ENCODE measurements at regions of chr2 and their contacts with region 1.

Region 1: DNA sequence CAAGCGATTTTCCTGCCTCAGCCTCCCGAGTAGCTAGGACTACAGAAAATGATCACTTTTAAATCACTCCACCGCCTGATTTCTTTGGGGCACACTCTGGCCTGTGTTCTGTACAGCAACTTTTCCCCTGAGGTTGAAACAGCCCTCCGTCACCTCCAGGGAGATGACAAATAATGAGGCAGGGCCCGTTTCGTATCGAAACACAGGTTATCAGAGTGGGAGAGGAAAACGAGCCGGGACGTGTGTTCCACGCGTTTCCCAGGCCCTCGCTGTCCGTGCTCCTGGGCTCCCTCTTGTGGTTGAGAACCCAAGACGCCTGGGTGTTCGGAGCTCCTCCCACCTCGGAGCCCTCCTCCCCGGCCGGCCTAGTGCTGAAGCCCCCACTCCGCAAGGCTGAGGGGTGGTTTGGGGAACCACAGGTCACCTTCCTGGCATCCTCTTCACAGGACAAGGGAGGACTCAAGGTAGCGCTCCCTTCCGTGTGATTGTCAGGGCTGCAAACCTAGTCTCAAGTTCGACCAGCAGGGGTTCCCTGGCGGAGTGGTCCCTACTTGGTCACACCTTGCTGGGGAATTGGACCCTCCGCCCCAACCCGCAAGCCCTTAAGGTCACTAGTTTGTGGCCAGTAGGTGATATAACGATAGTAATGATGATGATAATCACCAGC is 12.8 kb downstream of the ATP6V1B1 start:
- DNase-seq: peak; percentile 74 to 85 (median 76)
- ATAC-seq: peak; percentile 58 to 98 (median 94)
- H3K4me3 ChIP-seq: peak overlapping the region in 9 of 12 donors; percentile 27 to 48 (median 34)
- H3K27ac ChIP-seq: no peak overlapping the region
- H3K4me1 ChIP-seq: peaks cover 0 to 10% (median 0%) of the 10 kb centered on the region in 12 donors
- H3K27me3 ChIP-seq: peaks cover 0 to 17% (median 0%) of the 10 kb centered on the region in 9 donors
- CTCF ChIP-seq: peak; percentile 76 to 96 (median 84)
- POLR2A ChIP-seq: no peak

Region 2: DNA sequence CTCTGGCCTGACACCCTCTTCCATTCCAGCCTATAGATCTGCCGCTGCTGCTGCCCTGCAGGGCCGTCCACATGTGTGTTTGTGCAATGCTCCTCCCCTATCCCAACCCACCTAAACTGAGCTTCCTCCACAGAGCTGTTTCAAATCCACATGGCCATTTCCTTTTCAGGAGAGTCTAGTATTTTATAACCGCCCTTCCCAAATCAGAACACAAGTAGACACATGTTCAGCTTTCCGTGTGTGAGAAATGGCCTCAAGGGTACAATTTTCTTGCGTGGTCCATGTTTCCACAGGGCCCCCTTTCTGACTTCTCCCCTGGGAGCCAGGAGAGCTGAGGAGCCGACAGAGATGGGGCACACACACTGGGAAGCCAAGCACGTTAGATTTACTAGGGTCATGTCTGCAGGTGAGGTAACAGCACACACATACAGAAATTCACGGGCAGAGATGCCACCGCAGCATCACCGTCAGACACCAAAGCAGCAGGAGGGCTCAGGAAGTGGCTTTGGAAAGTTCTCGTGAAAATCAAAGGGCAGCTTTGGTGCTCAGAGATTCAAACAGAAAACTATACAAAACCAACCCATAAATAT is 292.0 kb before region 1 on chr2:
- intact Hi-C with region 1: loop called in 3 of 10 experiments (anchors 10 kb)
- DNase-seq: no peak
- ATAC-seq: no peak
- H3K4me3 ChIP-seq: no peak overlapping the region
- H3K27ac ChIP-seq: no peak overlapping the region
- H3K4me1 ChIP-seq: no peaks in the 10 kb centered on the region
- H3K27me3 ChIP-seq: peaks cover 0 to 48% (median 7%) of the 10 kb centered on the region in 9 donors
- CTCF ChIP-seq: no peak
- POLR2A ChIP-seq: no peak

Region 3: DNA sequence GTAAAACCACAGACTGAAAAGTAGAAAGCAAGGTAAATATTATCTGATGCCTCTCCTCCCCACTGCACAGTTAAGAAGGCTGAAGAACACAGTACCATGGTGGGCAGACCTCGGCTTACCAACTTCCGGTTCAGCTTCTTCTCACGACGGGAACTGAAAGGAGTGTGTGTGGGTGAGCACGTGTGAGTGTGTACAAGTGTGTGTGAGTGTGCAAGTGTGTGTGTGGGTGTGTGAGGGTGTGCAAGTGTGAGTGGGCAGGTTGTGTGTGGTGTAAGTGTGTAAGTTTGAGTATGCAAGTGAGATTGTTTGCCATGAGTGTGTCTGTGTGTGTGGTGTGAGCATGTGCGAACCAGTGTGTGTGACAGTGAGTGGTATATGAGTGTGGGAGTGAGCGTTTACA is 283.9 kb before region 1 on chr2:
- intact Hi-C with region 1: loop called in 3 of 10 experiments (anchors 10 kb)
- DNase-seq: no peak
- ATAC-seq: no peak
- H3K4me3 ChIP-seq: no peak overlapping the region
- H3K27ac ChIP-seq: no peak overlapping the region
- H3K4me1 ChIP-seq: no peaks in the 10 kb centered on the region
- H3K27me3 ChIP-seq: no peaks in the 10 kb centered on the region
- CTCF ChIP-seq: no peak
- POLR2A ChIP-seq: no peak

Region 4: GRCh38 chr2:70789304-70790135 is 158.9 kb before region 1 on chr2:
- intact Hi-C with region 1: loop called in 9 of 10 experiments (anchors 1 to 10 kb)
- DNase-seq: peak; percentile 52 to 74 (median 54)
- ATAC-seq: peak; percentile 54 to 88 (median 78)
- H3K4me3 ChIP-seq: peak overlapping the region in 11 of 12 donors; percentile 11 to 49 (median 34)
- H3K27ac ChIP-seq: no peak overlapping the region
- H3K4me1 ChIP-seq: peaks cover 0 to 32% (median 8%) of the 10 kb centered on the region in 12 donors
- H3K27me3 ChIP-seq: peaks cover 11 to 73% (median 32%) of the 10 kb centered on the region in 9 donors
- CTCF ChIP-seq: peak; percentile 44 to 71 (median 60)
- POLR2A ChIP-seq: no peak

Region 5: GRCh38 chr2:70861777-70862625 is 86.5 kb before region 1 on chr2:
- intact Hi-C with region 1: loop called in 4 of 10 experiments (anchors 2 kb)
- DNase-seq: peak; percentile 70 to 83 (median 76)
- ATAC-seq: peak in 3 of 4 donors; percentile 86 to 89 (median 88)
- H3K4me3 ChIP-seq: no peak overlapping the region
- H3K27ac ChIP-seq: no peak overlapping the region
- H3K4me1 ChIP-seq: peaks cover 0 to 5% (median 0%) of the 10 kb centered on the region in 12 donors
- H3K27me3 ChIP-seq: peaks cover 3 to 52% (median 19%) of the 10 kb centered on the region in 9 donors
- CTCF ChIP-seq: peak; percentile 89 to 99 (median 95)
- POLR2A ChIP-seq: no peak

Region 6: GRCh38 chr2:70871398-70872211 is 76.9 kb before region 1 on chr2:
- intact Hi-C with region 1: loop called in 9 of 10 experiments (anchors 1 to 5 kb)
- DNase-seq: peak; percentile 83 to 92 (median 87)
- ATAC-seq: peak; percentile 89 to 97 (median 96)
- H3K4me3 ChIP-seq: peak overlapping the region in 3 of 12 donors; percentile 2 to 25 (median 15)
- H3K27ac ChIP-seq: no peak overlapping the region
- H3K4me1 ChIP-seq: peaks cover 0 to 13% (median 0%) of the 10 kb centered on the region in 12 donors
- H3K27me3 ChIP-seq: peaks cover 0 to 68% (median 44%) of the 10 kb centered on the region in 9 donors
- CTCF ChIP-seq: peak; percentile 87 to 93 (median 91)
- POLR2A ChIP-seq: no peak

Region 7: DNA sequence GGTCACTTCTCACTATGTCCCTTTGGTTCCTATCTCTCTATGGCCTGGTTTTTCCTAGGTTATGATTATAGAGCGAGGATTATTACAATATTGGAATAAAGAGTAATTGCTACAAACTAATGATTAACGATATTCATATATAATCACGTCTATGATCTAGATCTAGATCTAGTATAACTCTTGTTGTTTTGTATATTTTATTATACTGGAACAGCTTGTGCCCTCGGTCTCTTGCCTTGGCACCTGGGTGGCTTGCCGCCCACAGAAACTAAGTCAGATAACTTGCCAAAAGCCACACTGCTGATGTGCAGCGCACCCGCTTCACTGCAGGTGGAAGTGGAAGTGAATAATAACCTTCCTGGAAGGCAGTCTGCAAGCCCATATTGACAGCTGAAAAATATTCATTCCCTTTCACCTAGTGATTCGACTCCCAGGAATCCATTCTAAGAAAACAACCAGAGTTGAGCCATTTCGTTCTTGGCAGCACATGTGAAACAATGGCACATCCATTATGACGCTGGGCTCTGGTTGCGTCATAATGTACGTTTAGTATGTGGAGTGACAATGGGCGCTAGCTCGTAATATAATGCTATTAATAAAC is 29.2 kb after region 1 on chr2:
- intact Hi-C with region 1: loop called in 1 of 10 experiments (anchors 1 kb)
- DNase-seq: peak in 1 of 5 donors; percentile 25
- ATAC-seq: peak in 1 of 4 donors; percentile 6
- H3K4me3 ChIP-seq: peak overlapping the region in 11 of 12 donors; percentile 52 to 73 (median 64)
- H3K27ac ChIP-seq: peak overlapping the region in 10 of 12 donors; percentile 63 to 92 (median 80)
- H3K4me1 ChIP-seq: peaks cover 0 to 24% (median 15%) of the 10 kb centered on the region in 12 donors
- H3K27me3 ChIP-seq: no peaks in the 10 kb centered on the region
- CTCF ChIP-seq: peak in 2 of 12 donors; percentile 13 to 16
- POLR2A ChIP-seq: no peak

Measured in heart left ventricle (tissue), 16 donors.